Gastrocnemius medialis (tissue), 4 donors: ENCODE measurements at regions of chr9 and their contacts with region 1.

Region 1: DNA sequence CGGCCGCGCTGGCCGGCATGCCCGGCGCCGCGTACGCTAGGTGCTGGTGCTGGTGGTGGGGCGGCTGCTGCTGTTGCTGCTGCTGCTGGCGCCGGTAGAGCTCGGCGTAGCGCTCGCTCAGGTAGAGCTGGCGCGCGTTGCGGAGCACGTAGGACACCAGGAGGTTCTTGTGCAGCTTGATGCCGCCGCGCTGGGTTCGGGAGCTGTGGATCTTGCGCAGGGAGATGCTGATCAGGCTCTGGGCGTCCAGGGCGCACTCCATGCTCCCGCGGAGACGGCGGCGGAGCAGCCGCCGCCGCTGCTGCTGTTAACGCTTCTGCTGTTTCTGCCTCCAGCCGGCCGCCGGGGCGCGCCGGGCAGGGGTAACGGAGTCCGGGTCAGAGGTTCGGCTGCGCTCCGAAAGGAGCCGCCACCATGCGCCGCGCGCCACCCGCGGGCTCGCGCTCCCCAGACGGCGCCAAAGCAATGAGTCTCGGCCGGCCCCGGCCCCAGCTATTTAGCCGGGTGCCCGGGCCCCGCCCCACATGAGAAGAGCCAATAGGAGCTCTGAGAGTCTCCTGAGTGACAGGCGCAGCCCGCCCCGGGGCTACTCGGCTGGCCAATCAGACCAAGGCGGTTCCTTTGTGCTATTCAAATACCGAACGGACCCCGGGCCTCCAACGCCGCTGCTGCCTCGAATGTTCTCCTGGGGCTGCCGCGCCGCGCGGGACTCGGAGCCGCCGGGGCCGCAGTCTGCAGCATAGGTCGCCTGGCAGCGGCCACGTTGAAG is at the start of gene IER5L:
- DNase-seq: peak; percentile 93
- ATAC-seq: peak; percentile 79 to 81
- H3K4me3 ChIP-seq: peak within 1 kb of the TSS; percentile 64 to 86 (median 74)
- H3K27ac ChIP-seq: peak within 1 kb of the TSS; percentile 85 to 93 (median 87)
- H3K4me1 ChIP-seq: peaks cover 9 to 24% of the 10 kb centered on the region in 2 donors
- H3K27me3 ChIP-seq: peaks cover 0 to 5% (median 5%) of the 10 kb centered on the region in 3 donors
- CTCF ChIP-seq: peak in 1 of 5 experiments; percentile 6
- POLR2A ChIP-seq: peak; percentile 83 to 97
- total RNA-seq, gene IER5L: 0.92 to 3.4 (median 2.9) TPM

Region 2: DNA sequence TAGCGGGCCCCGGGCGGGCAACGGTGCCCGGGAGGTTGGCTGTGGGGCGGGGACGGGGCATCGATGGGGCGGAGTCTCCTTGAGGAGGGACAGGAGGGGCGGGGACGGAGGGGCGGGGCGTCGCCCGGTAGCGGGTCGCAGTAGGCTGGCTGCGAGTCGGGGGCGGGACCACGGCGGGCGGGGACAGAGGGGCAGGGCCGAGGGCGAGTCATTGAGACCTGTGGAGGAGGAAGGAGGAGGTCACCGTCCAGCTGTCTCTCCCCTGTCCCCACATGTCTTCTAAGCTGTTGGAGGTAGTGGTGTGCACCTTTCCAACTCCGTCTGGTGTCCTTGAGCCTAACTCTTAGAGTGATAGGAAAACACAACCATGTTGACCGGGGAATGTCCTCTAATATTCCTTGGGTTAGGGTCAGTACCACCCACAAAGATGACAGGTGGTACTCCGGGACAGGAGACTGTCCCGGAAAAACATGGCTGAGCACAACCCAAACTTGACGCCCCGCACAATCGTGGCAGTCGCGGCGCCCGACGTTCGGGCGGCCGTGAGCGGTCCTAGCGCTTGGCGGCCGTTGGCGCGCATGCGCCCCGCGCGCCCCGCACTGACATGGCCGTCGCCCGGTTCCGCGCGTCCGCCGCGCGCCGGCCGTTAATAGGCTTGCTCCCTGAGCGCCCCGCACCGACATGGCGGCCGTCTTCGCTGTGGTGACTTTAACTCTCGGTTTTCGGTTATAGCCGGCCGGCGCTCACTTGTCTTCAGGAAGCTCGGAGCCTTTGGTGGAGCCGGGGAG is 67.0 kb before region 1 on chr9 and contains the starts of genes CRAT and PTPA:
- in situ Hi-C with region 1: no loop called
- intact Hi-C with region 1: no loop called
- DNase-seq: peak; percentile 98
- ATAC-seq: peak; percentile 78 to 84
- H3K4me3 ChIP-seq: peak within 1 kb of the TSS; percentile 68 to 99 (median 91)
- H3K27ac ChIP-seq: peak within 1 kb of the TSS; percentile 92 to 99 (median 96)
- H3K4me1 ChIP-seq: peaks cover 55 to 60% of the 10 kb centered on the region in 2 donors
- H3K27me3 ChIP-seq: no peaks in the 10 kb centered on the region
- CTCF ChIP-seq: peak in 1 of 5 experiments; percentile 12
- POLR2A ChIP-seq: peak; percentile 97 to 99
- total RNA-seq, gene CRAT: 137 to 167 (median 144) TPM
- total RNA-seq, gene PTPA: 37.6 to 71.6 (median 53.5) TPM

Region 3: DNA sequence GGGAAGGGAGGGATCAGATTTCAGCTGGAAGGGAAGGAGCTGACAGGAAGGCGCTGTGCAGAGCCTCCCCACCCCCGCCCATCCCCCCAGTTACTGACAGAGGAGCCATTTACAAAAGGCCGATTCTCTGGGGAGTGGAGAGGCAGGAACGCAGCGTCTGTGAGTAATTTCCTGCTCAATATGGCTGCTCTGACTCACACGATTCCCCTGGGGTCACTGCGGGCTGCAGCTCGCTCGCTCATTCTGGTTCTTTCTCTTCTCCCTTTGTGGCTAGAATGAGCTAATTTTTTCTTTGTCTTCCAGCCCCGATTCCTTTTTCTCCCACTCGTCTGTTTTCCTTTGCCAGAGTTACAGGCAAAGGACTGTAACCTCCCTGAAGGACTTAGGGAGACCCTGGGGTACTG is 38.0 kb before region 1 on chr9:
- in situ Hi-C with region 1: no loop called
- intact Hi-C with region 1: loop called (anchors 2 kb)
- DNase-seq: peak; percentile 96 to 97
- ATAC-seq: peak; percentile 82 to 86
- H3K4me3 ChIP-seq: peak overlapping the region; percentile 51 to 77 (median 56)
- H3K27ac ChIP-seq: peak overlapping the region; percentile 95 to 100 (median 98)
- H3K4me1 ChIP-seq: peaks cover 67 to 72% of the 10 kb centered on the region in 2 donors
- H3K27me3 ChIP-seq: no peaks in the 10 kb centered on the region
- CTCF ChIP-seq: no peak
- POLR2A ChIP-seq: peak; percentile 36 to 60

Region 4: DNA sequence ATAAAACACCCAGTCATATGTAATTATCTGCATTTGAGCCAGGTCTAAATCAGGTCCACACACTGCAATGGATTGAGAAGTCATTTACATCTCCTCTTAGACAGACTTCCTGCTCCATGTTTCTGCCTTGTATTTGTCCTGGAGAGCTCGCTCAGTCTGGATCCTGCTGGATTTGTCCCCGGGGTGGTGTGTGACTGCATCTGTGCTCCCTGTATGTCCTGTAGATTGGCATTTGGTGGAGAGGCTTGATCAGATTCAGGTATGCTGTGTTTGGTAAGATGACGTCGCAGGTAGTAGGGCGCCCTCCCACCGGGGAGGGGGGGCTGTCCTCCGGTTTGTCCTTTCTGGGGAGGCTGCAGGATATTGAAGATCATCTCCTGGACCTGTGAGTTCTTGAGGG is 33.7 kb after region 1 on chr9:
- in situ Hi-C with region 1: no loop called
- intact Hi-C with region 1: no loop called
- DNase-seq: no peak
- ATAC-seq: no peak
- H3K4me3 ChIP-seq: no peak overlapping the region
- H3K27ac ChIP-seq: no peak overlapping the region
- H3K4me1 ChIP-seq: no peaks in the 10 kb centered on the region
- H3K27me3 ChIP-seq: no peaks in the 10 kb centered on the region
- CTCF ChIP-seq: no peak
- POLR2A ChIP-seq: no peak

Region 5: DNA sequence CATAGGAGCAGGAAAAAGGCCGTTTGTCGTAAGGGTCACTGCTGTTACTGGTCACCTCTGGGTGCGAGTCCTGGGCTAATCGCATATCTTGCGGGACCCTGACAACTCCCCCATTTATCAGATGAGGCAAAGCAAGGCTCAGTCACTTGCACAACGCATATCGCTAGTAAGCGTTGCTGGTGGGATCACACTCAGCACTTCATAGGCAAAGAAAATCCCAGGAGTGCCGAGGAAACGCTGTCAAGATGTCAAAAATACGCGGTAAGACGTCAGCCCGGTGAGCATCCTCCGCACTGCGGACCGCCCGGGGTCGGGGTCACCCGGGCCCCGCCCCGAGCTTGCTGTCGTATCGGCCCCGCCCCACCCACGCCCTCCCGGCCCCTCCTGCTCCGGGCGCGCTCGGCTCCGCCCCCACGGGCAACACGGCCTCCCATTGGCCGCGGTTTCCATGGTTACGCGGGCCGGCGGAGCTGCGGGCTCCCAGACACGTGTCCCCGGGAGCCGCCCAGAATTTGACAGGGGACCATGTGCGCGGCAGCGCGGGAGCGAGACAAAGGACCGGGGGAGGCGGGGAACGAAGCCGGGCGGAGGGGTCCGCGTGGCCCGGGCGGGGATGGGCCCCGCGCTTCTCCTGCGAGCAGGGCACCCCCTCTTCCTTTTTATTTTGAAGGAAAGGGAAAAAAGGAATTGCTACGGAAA is 80.3 kb after region 1 on chr9:
- in situ Hi-C with region 1: no loop called
- intact Hi-C with region 1: loop called (anchors 5 kb)
- DNase-seq: peak; percentile 66 to 79
- ATAC-seq: peak; percentile 71 to 74
- H3K4me3 ChIP-seq: peak overlapping the region; percentile 1 to 46 (median 32)
- H3K27ac ChIP-seq: peak overlapping the region; percentile 34 to 71 (median 64)
- H3K4me1 ChIP-seq: peaks cover 17 to 23% of the 10 kb centered on the region in 2 donors
- H3K27me3 ChIP-seq: peaks cover 8 to 23% (median 16%) of the 10 kb centered on the region in 3 donors
- CTCF ChIP-seq: no peak
- POLR2A ChIP-seq: no peak

Region 6: GRCh38 chr9:129383561-129384416 is 205.8 kb after region 1 on chr9:
- in situ Hi-C with region 1: no loop called
- intact Hi-C with region 1: loop called (anchors 1 kb)
- DNase-seq: peak; percentile 57 to 72
- ATAC-seq: peak; percentile 85 to 89
- H3K4me3 ChIP-seq: peak overlapping the region; percentile 63 to 98 (median 71)
- H3K27ac ChIP-seq: peak overlapping the region; percentile 83 to 94 (median 88)
- H3K4me1 ChIP-seq: peaks cover 8 to 17% of the 10 kb centered on the region in 2 donors
- H3K27me3 ChIP-seq: no peaks in the 10 kb centered on the region
- CTCF ChIP-seq: peak in 2 of 5 experiments; percentile 5 to 7
- POLR2A ChIP-seq: peak in 1 of 2 donors; percentile 47

Region 7: DNA sequence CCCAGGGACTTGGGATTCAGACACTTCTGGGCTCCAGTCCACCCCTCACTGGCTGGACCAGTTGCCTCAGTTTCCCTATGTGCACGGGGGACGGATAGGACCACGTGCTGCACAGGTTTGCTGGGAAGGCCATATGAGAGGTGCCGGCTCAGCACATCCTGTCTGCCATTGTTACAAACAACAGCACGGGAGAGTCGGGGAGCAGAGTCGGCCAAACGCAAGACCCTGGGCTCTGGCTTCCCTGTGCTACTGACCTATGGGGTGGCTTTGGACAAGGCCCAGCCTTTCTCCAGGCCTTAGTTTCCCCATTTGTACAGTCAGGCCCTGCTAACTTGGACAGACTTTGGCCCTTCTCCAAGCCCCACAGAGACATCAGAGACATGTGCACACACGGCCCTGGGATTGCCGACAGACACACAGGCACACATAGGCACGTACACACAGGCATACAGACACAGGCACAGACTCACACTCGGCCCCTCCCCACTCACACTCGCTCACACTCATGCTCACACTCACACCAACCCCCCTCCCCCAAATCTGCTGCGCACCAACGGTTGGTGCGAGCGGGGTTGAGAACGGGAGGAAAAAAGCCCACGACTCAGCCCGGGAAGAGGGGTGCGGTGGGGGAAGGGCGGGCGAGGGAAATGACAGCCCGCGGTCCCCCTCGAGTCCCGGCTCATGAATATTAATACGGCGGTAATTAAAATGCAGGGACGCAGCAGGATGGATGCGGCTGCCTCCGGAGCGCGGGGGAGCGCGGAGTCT is 309.9 kb after region 1 on chr9:
- in situ Hi-C with region 1: no loop called
- intact Hi-C with region 1: loop called (anchors 2 kb)
- DNase-seq: peak in 1 of 2 donors; percentile 50
- ATAC-seq: peak in 1 of 2 donors; percentile 1
- H3K4me3 ChIP-seq: peak overlapping the region; percentile 52 to 82 (median 62)
- H3K27ac ChIP-seq: peak overlapping the region; percentile 96 to 99 (median 98)
- H3K4me1 ChIP-seq: peaks cover 37 to 54% of the 10 kb centered on the region in 2 donors
- H3K27me3 ChIP-seq: no peaks in the 10 kb centered on the region
- CTCF ChIP-seq: no peak
- POLR2A ChIP-seq: no peak

Region 8: GRCh38 chr9:129626079-129626624 is 448.2 kb after region 1 on chr9 and contains the start of gene NTMT1:
- in situ Hi-C with region 1: no loop called
- intact Hi-C with region 1: loop called (anchors 5 kb)
- DNase-seq: peak; percentile 77 to 80
- ATAC-seq: peak; percentile 90
- H3K4me3 ChIP-seq: peak within 1 kb of the TSS; percentile 71 to 91 (median 77)
- H3K27ac ChIP-seq: peak within 1 kb of the TSS; percentile 90 to 98 (median 92)
- H3K4me1 ChIP-seq: peaks cover 44% of the 10 kb centered on the region in 2 donors
- H3K27me3 ChIP-seq: peaks cover 0 to 7% (median under 1%) of the 10 kb centered on the region in 3 donors
- CTCF ChIP-seq: peak in 2 of 5 experiments; percentile 45 to 53
- POLR2A ChIP-seq: peak; percentile 99
- total RNA-seq, gene NTMT1: 37.8 to 82.1 (median 48.1) TPM